SK-N-SH (cell line): ENCODE measurements at regions of chr2 and their contacts with region 1.

Region 1: DNA sequence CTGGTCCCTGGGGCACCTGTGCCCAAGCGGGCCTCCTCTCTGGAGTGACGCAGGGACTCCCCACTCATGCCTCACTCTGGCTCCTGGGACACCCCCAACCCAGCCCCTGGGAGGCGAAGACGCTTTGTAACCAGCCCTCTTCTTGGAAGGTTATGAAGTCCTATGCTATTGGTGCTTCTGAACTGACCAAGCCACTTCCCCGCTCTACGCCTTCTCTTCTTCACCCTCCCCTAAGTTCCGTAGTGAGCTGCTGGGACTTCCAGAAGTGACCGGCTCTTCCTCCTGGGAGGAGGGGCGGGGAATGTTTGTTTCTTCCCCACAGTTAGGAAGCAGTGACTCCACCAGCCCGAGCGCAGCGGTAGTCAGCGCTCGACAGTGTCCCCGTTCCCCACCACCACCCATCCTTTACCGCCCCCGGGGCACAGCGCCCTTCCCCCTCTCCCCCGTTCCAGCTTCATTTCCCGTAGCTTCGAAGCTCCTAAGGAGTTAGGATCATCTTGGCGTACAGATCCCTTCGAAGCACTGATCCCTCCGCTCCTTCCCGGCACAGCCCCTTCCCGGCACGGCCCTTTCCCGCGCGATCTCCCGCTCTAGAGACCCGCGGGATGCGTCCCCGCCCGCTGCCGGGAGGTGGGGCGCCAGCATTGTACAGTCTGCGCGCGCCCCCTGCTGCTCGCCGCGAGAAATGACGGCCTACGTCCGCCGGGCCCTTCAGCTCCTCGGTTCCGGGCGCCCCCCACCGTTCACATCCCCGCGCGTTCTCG is 25.3 kb upstream of the NOTO start:
- DNase-seq: peak; percentile 97
- H3K4me3 ChIP-seq: peak overlapping the region; percentile 57 to 61
- H3K27ac ChIP-seq: no peak overlapping the region
- H3K4me1 ChIP-seq: peaks cover 0 to 30% of the 10 kb centered on the region in 2 experiments; a peak in 1 of 4 replicates
- H3K27me3 ChIP-seq: peaks cover 27% of the 10 kb centered on the region
- CTCF ChIP-seq: peak; percentile 90
- EP300 ChIP-seq: no peak
- RAD21 ChIP-seq: peak; percentile 85

Region 2: GRCh38 chr2:72887754-72888437 is 289.2 kb before region 1 on chr2:
- CTCF ChIA-PET with region 1: interaction called, 173 read pairs
- POLR2A ChIA-PET with region 1: interaction called, 6 read pairs
- DNase-seq: peak; percentile 86
- H3K4me3 ChIP-seq: peak overlapping the region; percentile 70 to 95
- H3K27ac ChIP-seq: peak overlapping the region; percentile 71 to 74
- H3K4me1 ChIP-seq: peaks cover 6 to 12% of the 10 kb centered on the region in 2 experiments; a peak in 2 of 4 replicates
- H3K27me3 ChIP-seq: no peaks in the 10 kb centered on the region
- CTCF ChIP-seq: peak; percentile 92
- EP300 ChIP-seq: peak in 1 of 2 experiments; percentile 31; a peak in 1 of 4 replicates
- RAD21 ChIP-seq: peak; percentile 47; the same call in 1 of the 2 replicates

Region 3: GRCh38 chr2:72980535-72981217 is 196.4 kb before region 1 on chr2:
- CTCF ChIA-PET with region 1: interaction called, 18 read pairs
- POLR2A ChIA-PET with region 1: no interaction called
- DNase-seq: no peak
- H3K4me3 ChIP-seq: no peak overlapping the region
- H3K27ac ChIP-seq: no peak overlapping the region
- H3K4me1 ChIP-seq: peaks cover 0 to 24% of the 10 kb centered on the region in 2 experiments; a peak in 1 of 4 replicates
- H3K27me3 ChIP-seq: no peaks in the 10 kb centered on the region
- CTCF ChIP-seq: no peak
- EP300 ChIP-seq: no peak
- RAD21 ChIP-seq: no peak

Region 4: DNA sequence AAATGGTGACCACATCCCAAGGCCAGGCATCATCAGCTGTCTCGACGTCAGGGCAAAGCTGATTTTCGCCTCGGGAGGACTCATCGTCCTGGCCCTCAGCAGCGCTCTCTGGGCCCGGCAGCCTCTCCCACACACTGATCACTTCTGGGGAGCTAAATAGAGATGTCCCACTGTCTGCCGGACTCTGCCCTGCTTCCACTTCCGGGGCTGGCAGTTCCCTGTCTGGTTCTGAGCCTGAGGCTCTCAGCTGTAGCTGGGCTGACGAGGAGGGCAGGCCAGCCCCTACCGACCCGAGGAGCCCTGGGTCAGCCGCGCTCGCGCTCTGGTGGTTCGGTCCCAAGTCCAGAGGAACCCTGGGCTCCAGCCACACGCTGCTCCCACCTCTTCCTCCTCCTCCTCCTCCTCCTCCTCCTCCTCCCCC is 96.3 kb before region 1 on chr2:
- CTCF ChIA-PET with region 1: interaction called, 77 read pairs
- POLR2A ChIA-PET with region 1: no interaction called
- DNase-seq: no peak
- H3K4me3 ChIP-seq: no peak overlapping the region
- H3K27ac ChIP-seq: no peak overlapping the region
- H3K4me1 ChIP-seq: no peaks in the 10 kb centered on the region; a peak in 1 of 4 replicates
- H3K27me3 ChIP-seq: no peaks in the 10 kb centered on the region
- CTCF ChIP-seq: no peak
- EP300 ChIP-seq: no peak
- RAD21 ChIP-seq: no peak

Region 5: GRCh38 chr2:73112913-73113633 is 64.0 kb before region 1 on chr2 and contains the start of gene RAB11FIP5:
- CTCF ChIA-PET with region 1: interaction called, 10 read pairs
- POLR2A ChIA-PET with region 1: no interaction called
- DNase-seq: peak; percentile 95
- H3K4me3 ChIP-seq: peak within 1 kb of the TSS; percentile 85 to 89
- H3K27ac ChIP-seq: peak within 1 kb of the TSS; percentile 80 to 98
- H3K4me1 ChIP-seq: peaks cover 14 to 34% of the 10 kb centered on the region in 2 experiments
- H3K27me3 ChIP-seq: no peaks in the 10 kb centered on the region
- CTCF ChIP-seq: no peak
- EP300 ChIP-seq: peak in 1 of 2 experiments; percentile 29; a peak in 1 of 4 replicates
- RAD21 ChIP-seq: no peak
- polyA plus RNA-seq, gene RAB11FIP5: 16.4 and 17.1 TPM in 2 replicates

Region 6: DNA sequence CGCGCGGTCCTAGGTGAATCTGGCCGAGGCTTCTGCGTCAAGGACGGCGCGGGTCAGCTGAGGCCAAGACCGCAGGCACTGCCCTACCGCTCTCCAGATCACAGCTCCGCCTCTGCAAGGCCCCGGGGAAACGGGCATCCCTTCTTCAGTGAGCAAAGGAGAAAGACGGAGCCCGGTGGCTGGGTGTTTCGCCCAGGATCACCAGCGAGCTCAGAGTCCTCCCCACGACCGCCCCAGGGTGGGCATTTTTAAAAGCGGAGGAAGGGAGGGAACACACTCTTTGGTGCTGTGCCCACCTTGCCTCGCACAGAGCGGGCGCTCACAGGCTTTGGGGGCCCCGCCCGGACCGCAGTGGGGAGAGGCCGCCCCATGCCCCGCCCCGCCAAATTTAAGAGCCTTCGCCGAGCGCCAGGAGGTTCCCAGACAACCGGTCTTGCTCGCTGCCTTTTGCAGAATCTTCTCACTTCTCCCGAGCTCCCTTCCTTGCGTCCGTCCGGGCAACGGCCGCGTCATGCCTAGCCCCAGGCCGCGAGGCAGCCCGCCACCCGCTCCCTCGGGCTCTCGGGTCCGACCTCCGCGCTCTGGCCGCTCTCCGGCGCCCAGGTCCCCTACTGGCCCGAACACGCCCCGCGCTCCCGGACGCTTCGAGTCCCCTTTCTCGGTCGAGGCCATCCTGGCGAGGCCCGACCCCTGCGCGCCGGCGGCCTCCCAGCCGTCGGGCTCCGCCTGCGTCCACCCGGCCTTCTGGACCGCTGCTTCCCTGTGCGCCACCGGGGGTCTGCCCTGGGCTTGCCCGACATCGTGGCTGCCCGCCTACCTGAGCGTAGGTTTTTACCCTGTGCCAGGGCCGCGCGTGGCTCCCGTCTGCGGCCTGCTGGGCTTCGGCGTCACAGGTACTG is 25.3 kb after region 1 on chr2 and contains the start of gene NOTO:
- CTCF ChIA-PET with region 1: interaction called, 74 read pairs
- POLR2A ChIA-PET with region 1: no interaction called
- DNase-seq: peak; percentile 73
- H3K4me3 ChIP-seq: no peak within 1 kb of the TSS
- H3K27ac ChIP-seq: no peak within 1 kb of the TSS
- H3K4me1 ChIP-seq: no peaks in the 10 kb centered on the region
- H3K27me3 ChIP-seq: peaks cover 72% of the 10 kb centered on the region
- CTCF ChIP-seq: no peak
- EP300 ChIP-seq: no peak
- RAD21 ChIP-seq: no peak
- polyA plus RNA-seq, gene NOTO: not detected in 2 replicates